Common myeloid progenitor, CD34-positive (primary cell): ENCODE measurements at regions of chr19 and their contacts with region 1.

Region 1: GRCh38 chr19:17859533-17860330 is at the start of gene RPL18A:
- DNase-seq: peak; percentile 100
- H3K4me3 ChIP-seq: peak within 1 kb of the TSS; percentile 90 to 100 (median 97)
- H3K27ac ChIP-seq: peak within 1 kb of the TSS; percentile 77 to 93
- H3K4me1 ChIP-seq: peaks cover 9 to 30% (median 24%) of the 10 kb centered on the region in 4 experiments
- H3K27me3 ChIP-seq: no peaks in the 10 kb centered on the region

Region 2: DNA sequence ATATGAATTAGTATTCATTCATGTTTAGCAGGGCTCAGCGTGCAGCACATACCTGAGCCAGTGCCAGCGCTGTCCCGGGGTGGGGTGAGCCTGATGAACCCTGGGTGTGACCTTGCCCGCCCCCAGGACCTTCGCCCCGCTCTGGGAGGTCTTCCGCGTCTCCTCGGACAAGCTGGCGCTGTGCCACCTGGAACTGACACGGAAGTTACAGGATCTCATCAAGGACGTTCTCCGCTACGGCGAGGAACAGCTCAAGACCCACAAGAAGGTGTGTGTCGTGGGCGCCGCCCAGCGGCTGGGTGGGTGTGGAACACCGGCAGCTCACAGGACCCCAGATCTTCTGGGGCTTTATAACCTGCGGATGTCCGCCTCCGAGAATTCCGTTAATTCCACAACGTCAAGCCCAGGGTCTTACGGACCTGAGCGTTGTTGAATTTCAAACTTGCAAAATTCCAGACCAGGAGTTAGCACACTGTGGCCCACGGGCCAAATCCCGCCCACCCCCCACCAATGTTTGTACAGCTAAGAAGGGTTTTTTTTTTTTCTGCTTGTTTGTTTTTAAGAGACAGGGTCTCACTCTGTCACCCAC is 93.1 kb before region 1 on chr19:
- CTCF ChIA-PET with region 1: interaction called, 10 read pairs
- POLR2A ChIA-PET with region 1: no interaction called
- DNase-seq: peak; percentile 83 to 92 (median 88)
- H3K4me3 ChIP-seq: peak overlapping the region in 1 of 7 experiments; percentile 45
- H3K27ac ChIP-seq: no peak overlapping the region
- H3K4me1 ChIP-seq: peaks cover 0 to 17% (median 16%) of the 10 kb centered on the region in 4 experiments
- H3K27me3 ChIP-seq: no peaks in the 10 kb centered on the region

Region 3: DNA sequence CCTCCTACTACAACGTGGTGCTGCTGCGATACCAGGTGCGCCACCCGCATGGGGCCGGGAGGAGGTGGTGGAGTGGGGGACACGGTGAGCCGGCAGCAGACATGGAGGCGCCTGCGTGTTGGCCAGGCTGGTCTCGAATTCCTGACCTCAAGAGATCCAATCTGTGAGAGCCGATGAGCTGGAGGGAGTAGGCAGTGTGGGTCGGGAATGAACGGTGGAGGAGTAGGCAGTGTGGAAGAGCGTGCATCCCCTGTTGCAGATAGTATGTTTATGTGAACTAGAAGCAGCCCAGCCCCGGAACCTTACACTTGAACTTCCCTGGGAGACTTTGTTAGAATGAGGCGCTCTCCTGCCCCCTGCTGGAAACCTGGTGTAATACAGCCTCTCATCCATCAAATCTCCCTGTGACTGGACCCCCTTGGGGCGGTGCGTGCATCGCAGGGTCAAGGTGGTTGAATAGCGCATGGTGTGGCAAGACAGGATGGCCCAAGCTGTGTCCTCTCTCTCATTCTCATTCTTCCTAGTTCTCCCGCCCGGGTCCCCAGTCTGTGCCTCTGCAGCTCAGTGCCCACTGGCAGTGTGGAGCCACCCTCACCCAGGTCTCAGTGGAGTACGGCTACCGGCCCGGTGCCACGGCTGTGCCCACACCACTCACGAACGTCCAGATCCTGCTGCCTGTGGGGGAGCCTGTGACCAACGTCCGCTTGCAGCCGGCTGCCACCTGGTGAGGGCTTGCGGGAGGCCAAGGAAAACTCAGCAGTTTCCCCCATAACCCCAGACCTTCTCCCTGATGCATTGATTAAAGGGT is 75.3 kb before region 1 on chr19:
- CTCF ChIA-PET with region 1: interaction called, 20 read pairs
- POLR2A ChIA-PET with region 1: no interaction called
- DNase-seq: peak; percentile 71 to 84 (median 77)
- H3K4me3 ChIP-seq: no peak overlapping the region
- H3K27ac ChIP-seq: no peak overlapping the region
- H3K4me1 ChIP-seq: peaks cover 0 to 10% (median 9%) of the 10 kb centered on the region in 4 experiments
- H3K27me3 ChIP-seq: no peaks in the 10 kb centered on the region

Region 4: GRCh38 chr19:17803264-17803922 is 56.3 kb before region 1 on chr19:
- CTCF ChIA-PET with region 1: interaction called, 10 read pairs
- POLR2A ChIA-PET with region 1: interaction called, 4 read pairs
- DNase-seq: peak; percentile 74 to 93 (median 91)
- H3K4me3 ChIP-seq: peak overlapping the region in 1 of 7 experiments; percentile 45
- H3K27ac ChIP-seq: no peak overlapping the region
- H3K4me1 ChIP-seq: peaks cover 0 to 24% (median 20%) of the 10 kb centered on the region in 4 experiments
- H3K27me3 ChIP-seq: no peaks in the 10 kb centered on the region

Region 5: DNA sequence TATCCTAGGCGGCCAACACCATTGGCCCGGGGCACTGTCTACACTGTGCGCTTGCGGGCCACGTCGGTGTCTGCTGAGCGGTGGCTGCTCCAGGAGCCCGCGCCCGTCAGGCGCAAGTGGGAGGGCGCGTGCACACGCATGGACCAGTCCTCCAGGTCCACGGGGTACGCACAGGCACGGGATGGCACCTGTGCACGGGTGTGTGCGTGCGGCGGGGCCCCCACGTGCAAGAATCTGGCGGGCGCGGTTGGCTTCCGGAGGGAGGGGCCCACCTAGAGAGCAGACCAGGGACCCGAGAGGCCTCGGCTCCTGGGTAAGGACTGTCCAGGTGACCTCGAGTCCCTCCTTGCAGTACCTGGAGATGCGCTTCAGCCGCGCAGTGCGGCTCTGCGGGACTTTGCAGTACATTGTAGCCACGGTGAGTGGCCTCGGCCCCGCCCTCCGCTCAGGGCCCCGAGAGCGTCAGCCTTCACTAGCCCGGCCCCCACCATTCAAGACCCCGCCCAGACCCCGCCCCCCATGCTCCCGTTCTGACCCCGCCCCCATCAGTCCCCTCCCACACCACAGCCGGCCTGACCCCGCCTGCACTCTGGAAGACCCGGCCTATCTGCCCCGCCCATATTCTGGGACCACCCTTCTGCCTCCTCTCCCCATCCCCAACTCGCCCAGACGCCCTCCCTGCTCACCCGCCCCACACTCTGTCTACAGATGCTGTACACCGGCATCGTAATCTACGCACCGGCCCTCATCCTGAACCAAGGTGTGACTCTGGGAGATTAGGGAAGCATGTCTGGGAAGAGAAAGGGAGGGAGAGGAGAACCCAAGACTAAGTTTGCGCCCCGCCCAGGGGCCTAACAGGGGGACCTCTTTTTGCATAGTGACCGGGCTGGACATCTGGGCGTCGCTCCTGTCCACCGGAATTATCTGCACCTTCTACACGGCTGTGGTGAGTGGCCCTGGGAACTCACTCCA is 14.3 kb after region 1 on chr19:
- CTCF ChIA-PET with region 1: interaction called, 29 read pairs
- POLR2A ChIA-PET with region 1: interaction called, 6 read pairs
- DNase-seq: peak; percentile 70 to 77 (median 75)
- H3K4me3 ChIP-seq: peak overlapping the region in 6 of 7 experiments; percentile 13 to 69 (median 56)
- H3K27ac ChIP-seq: no peak overlapping the region
- H3K4me1 ChIP-seq: peaks cover 0 to 27% (median 18%) of the 10 kb centered on the region in 4 experiments
- H3K27me3 ChIP-seq: peaks cover 0 to 20% (median 8%) of the 10 kb centered on the region in 5 experiments

Region 6: DNA sequence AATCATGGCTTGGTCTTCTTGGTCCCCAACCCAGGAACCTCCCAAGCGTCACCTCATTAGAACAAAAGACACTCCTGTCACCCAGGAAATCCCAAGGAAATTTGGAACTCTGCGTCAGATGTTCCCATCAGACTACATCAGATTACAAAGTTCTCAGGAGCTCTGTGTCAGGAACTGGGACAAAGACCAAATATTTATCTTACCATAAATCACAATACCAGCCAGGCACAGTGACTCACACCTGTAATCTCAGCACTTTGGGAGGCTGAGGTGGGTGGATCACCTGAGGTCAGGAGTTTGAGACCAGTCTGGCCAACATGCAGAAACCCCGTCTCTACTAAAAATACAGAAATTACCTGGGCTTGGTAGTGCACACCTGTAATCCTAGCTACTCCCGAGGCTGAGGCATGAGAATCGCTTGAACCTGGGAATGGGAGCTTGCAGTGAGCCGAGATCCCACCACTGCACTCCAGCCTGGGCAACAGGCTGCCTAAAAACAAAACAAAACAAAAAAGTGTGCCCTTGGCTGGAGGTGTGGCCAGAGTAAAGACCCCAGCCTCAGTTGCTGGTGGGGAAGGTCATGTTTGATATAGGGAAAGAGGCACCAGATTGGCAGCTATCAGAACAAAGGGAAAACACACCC is 56.3 kb after region 1 on chr19:
- CTCF ChIA-PET with region 1: no interaction called
- POLR2A ChIA-PET with region 1: no interaction called
- DNase-seq: no peak
- H3K4me3 ChIP-seq: no peak overlapping the region
- H3K27ac ChIP-seq: no peak overlapping the region
- H3K4me1 ChIP-seq: no peaks in the 10 kb centered on the region
- H3K27me3 ChIP-seq: peaks cover 0 to 1% (median 0%) of the 10 kb centered on the region in 5 experiments

Region 7: GRCh38 chr19:17938092-17938845 is 78.5 kb after region 1 on chr19:
- CTCF ChIA-PET with region 1: interaction called, 63 read pairs
- POLR2A ChIA-PET with region 1: interaction called, 21 read pairs
- DNase-seq: peak; percentile 70 to 87 (median 78)
- H3K4me3 ChIP-seq: no peak overlapping the region
- H3K27ac ChIP-seq: no peak overlapping the region
- H3K4me1 ChIP-seq: peaks cover 2 to 7% (median 6%) of the 10 kb centered on the region in 4 experiments
- H3K27me3 ChIP-seq: no peaks in the 10 kb centered on the region

Region 8: DNA sequence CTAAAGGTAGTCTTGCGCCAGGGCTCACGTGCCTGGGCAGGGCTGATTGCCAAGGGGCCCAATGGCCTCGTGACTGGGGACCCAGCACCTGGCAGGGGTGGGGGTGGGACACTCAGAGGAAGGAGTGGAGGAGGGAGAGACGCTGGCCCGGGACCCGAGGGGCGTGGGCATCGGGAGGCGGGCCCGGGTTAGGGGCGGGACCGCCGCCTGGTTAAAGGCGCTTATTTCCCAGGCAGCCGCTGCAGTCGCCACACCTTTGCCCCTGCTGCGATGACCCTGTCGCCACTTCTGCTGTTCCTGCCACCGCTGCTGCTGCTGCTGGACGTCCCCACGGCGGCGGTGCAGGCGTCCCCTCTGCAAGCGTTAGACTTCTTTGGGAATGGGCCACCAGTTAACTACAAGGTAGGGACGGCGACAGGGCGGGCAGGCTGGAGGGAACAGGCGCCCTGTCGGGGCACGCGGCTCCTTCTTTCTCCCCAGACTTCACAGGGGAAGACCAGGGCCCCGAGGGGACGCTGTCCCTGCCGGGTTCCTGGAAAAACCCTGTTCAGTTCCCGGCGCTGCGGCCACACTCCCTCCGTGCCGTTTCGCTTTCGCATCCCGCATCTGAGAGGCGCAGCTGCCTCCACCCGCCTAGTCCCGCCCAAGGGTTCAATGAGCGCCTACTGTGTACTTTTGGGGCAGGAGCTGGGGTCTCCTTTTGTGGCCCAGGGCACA is 314.0 kb after region 1 on chr19 and contains the start of gene IFI30:
- CTCF ChIA-PET with region 1: no interaction called
- POLR2A ChIA-PET with region 1: no interaction called
- DNase-seq: peak; percentile 77 to 89 (median 84)
- H3K4me3 ChIP-seq: peak within 1 kb of the TSS; percentile 50 to 91 (median 79)
- H3K27ac ChIP-seq: peak within 1 kb of the TSS in 1 of 2 experiments; percentile 54
- H3K4me1 ChIP-seq: peaks cover 0 to 45% (median 30%) of the 10 kb centered on the region in 4 experiments
- H3K27me3 ChIP-seq: peaks cover 0 to 3% (median 0%) of the 10 kb centered on the region in 5 experiments